ENCODE measurements at regions of chr18 and their contacts with region 1.

Region 1: GRCh38 chr18:2571200-2572143 is at the starts of genes METTL4 and NDC80:
- DNase-seq: peak; percentile 91
- ATAC-seq: peak; percentile 84
- H3K4me3 Mint-ChIP-seq: peak within 1 kb of the TSS; percentile 98
- H3K27ac Mint-ChIP-seq: peak within 1 kb of the TSS; percentile 95
- H3K4me1 Mint-ChIP-seq: peaks cover 55% of the 10 kb centered on the region
- H3K27me3 Mint-ChIP-seq: no peaks in the 10 kb centered on the region
- total RNA-seq, gene METTL4: 12.8 to 22.0 TPM
- total RNA-seq, gene NDC80: 84.7 to 88.5 TPM

Region 2: GRCh38 chr18:2589345-2590068 is 18.0 kb after region 1 on chr18:
- CTCF ChIA-PET with region 1: interaction called, 7 read pairs
- POLR2A ChIA-PET with region 1: interaction called, 3 read pairs
- intact Hi-C with region 1: loop called in 1 of 2 experiments (anchors 2 kb)
- DNase-seq: no peak
- ATAC-seq: peak; percentile 78
- H3K4me3 Mint-ChIP-seq: peak overlapping the region; percentile 43
- H3K27ac Mint-ChIP-seq: peak overlapping the region; percentile 93
- H3K4me1 Mint-ChIP-seq: peaks cover 44% of the 10 kb centered on the region
- H3K27me3 Mint-ChIP-seq: no peaks in the 10 kb centered on the region

Region 3: GRCh38 chr18:2723207-2723606 is 151.7 kb after region 1 on chr18:
- CTCF ChIA-PET with region 1: no interaction called
- POLR2A ChIA-PET with region 1: no interaction called
- intact Hi-C with region 1: loop called (anchors 5 kb)
- DNase-seq: no peak
- ATAC-seq: peak; percentile 63
- H3K4me3 Mint-ChIP-seq: no peak overlapping the region
- H3K27ac Mint-ChIP-seq: peak overlapping the region; percentile 58
- H3K4me1 Mint-ChIP-seq: peaks cover 31% of the 10 kb centered on the region
- H3K27me3 Mint-ChIP-seq: no peaks in the 10 kb centered on the region

Region 4: GRCh38 chr18:2906704-2907549 is 335.5 kb after region 1 on chr18:
- CTCF ChIA-PET with region 1: no interaction called
- POLR2A ChIA-PET with region 1: no interaction called
- intact Hi-C with region 1: loop called in 1 of 2 experiments (anchors 5 kb)
- DNase-seq: peak; percentile 63
- ATAC-seq: peak; percentile 67
- H3K4me3 Mint-ChIP-seq: peak overlapping the region; percentile 78
- H3K27ac Mint-ChIP-seq: peak overlapping the region; percentile 72
- H3K4me1 Mint-ChIP-seq: peaks cover 17% of the 10 kb centered on the region
- H3K27me3 Mint-ChIP-seq: no peaks in the 10 kb centered on the region

Region 5: DNA sequence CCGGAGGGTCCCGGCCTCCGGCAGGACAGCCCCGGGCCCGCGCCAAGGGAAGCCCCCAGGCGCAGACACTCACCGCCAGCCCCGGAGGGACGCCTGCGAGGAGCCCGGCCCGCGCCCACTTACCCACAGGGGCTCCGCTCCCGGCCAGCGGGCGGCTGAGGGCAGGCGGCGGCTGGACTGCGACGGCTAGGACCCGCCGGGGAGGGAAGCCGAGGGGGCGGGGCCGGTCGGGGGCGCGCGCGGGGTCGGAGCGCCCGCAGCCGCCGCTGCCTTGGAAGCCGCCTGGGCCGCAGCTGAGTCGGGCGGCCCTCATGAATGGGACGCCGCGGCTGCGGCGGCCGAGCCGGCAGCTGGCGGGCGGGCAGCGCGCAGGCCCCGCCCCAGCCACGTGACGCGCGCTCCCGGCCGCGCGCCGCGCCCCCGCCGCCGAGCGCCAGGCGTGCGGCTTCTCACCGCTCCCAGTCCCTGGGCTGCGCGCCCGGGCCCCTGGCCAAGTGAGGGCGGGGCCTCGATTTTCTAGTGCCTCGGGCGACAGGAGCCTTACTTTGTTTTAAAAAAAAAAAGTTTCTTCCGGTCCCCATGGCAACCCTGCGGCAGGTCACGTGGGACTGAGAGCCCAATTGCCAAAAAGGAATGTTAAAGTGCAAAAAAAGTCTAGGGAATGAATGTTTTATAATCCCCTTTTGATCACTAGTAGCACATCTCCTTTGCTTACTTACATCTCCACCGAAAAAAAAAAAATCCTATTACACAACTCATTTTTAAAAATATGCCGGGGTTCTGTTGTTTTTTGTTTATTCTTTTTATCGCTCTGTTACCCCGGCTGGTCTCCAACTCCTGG is 441.7 kb after region 1 on chr18 and contains the start of gene LPIN2:
- CTCF ChIA-PET with region 1: no interaction called
- POLR2A ChIA-PET with region 1: no interaction called
- intact Hi-C with region 1: no loop called
- DNase-seq: peak; percentile 98
- ATAC-seq: peak; percentile 96
- H3K4me3 Mint-ChIP-seq: peak within 1 kb of the TSS; percentile 95
- H3K27ac Mint-ChIP-seq: peak within 1 kb of the TSS; percentile 94
- H3K4me1 Mint-ChIP-seq: peaks cover 66% of the 10 kb centered on the region
- H3K27me3 Mint-ChIP-seq: no peaks in the 10 kb centered on the region
- total RNA-seq, gene LPIN2: 82.6 to 95.3 TPM

Region 6: GRCh38 chr18:3604498-3605408 is 1033.3 kb after region 1 on chr18:
- CTCF ChIA-PET with region 1: no interaction called
- POLR2A ChIA-PET with region 1: no interaction called
- intact Hi-C with region 1: loop called in 1 of 2 experiments (anchors 5 kb)
- DNase-seq: peak; percentile 59
- ATAC-seq: peak; percentile 69
- H3K4me3 Mint-ChIP-seq: no peak overlapping the region
- H3K27ac Mint-ChIP-seq: no peak overlapping the region
- H3K4me1 Mint-ChIP-seq: peaks cover 11% of the 10 kb centered on the region
- H3K27me3 Mint-ChIP-seq: no peaks in the 10 kb centered on the region